Natural killer cell (primary cell): ENCODE measurements at regions of chr22 and their contacts with region 1.

Region 1: DNA sequence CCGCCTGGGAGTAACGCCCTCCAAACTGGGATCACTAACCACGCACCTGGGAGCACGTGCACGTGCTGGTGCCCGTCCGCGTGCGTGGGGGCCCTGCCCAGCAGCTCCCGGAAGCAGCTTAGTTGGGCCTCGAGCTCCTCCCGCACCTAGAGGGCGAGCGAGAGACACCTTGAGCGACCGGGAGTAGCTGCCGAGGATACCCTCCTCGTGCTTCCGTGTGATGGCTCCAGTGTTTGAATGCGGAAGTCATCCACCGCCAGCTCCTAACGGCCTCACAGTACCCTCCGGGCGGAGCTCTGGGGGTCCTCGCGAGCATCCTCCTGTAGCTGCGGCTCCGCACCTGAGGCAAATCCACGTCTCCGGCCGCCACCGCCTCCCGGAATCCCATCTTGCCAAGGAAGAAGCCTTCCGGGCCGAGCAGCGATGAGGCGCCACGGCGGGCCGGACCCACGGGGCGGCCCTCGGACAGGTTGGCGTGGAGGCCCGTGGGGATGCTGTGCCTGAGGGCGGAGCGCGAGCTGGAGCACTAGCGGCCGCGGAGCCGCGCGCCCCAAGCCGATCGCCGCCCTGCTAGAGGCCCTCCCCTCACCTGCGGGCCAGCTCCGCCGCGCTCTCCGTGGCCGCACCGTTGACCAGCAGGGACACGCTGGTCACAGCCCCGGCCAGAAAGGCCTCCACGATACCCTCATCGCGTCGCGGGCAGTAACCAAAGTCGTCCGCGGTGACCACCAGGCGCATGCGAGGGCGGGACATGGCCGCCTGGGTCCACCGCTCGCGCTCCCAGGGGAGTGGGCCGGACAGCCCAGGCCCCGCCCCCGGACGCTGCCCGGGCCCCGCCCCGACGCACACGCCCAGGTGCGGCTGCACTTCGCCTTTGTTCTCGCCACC is at the start of gene YDJC:
- DNase-seq: peak; percentile 93 to 97
- ATAC-seq: peak; percentile 87 to 97 (median 92)
- H3K4me3 ChIP-seq: peak within 1 kb of the TSS; percentile 99
- H3K4me3 Mint-ChIP-seq: peak within 1 kb of the TSS; percentile 90
- H3K27ac ChIP-seq: peak within 1 kb of the TSS; percentile 89
- H3K27ac Mint-ChIP-seq: peak within 1 kb of the TSS; percentile 75 to 83
- H3K4me1 ChIP-seq: peaks cover 45% of the 10 kb centered on the region
- H3K4me1 Mint-ChIP-seq: peaks cover 32 to 36% of the 10 kb centered on the region in 2 donors
- H3K27me3 ChIP-seq: no peaks in the 10 kb centered on the region
- H3K27me3 Mint-ChIP-seq: no peaks in the 10 kb centered on the region
- CTCF ChIP-seq: no peak
- total RNA-seq, gene YDJC: 20.5 to 24.4 (median 21.6) TPM

Region 2: DNA sequence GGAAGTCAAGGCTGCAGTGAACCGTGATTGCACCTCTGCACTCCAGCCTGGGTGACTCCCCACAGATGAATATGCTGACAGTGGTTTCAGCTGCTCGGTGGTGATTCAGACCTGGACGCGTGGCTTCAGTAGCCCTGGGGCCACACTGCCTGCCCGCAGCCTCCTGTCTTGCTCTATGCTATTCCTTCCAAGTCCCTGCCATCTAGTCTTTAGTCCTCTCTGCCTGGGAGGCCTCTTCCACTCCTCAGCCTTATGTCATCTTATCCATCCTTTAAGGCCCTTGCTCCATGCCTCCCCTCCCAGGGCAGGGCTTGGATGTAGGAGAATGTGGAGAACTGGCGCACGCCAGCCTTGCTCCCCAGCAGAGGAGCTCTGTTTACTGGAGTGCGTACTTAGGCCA is 22.7 kb before region 1 on chr22:
- intact Hi-C with region 1: no loop called
- DNase-seq: no peak
- ATAC-seq: no peak
- H3K4me3 ChIP-seq: no peak overlapping the region
- H3K4me3 Mint-ChIP-seq: no peak overlapping the region
- H3K27ac ChIP-seq: no peak overlapping the region
- H3K27ac Mint-ChIP-seq: peak overlapping the region in 1 of 2 donors; percentile 56
- H3K4me1 ChIP-seq: peaks cover 20% of the 10 kb centered on the region
- H3K4me1 Mint-ChIP-seq: peaks cover 38 to 57% of the 10 kb centered on the region in 2 donors
- H3K27me3 ChIP-seq: no peaks in the 10 kb centered on the region
- H3K27me3 Mint-ChIP-seq: no peaks in the 10 kb centered on the region
- CTCF ChIP-seq: no peak

Region 3: GRCh38 chr22:21641789-21642583 is 12.5 kb after region 1 on chr22 and contains the start of gene SDF2L1:
- intact Hi-C with region 1: loop called (anchors 1 kb)
- DNase-seq: peak; percentile 98 to 99
- ATAC-seq: peak; percentile 94 to 99 (median 95)
- H3K4me3 ChIP-seq: peak within 1 kb of the TSS; percentile 92
- H3K4me3 Mint-ChIP-seq: peak within 1 kb of the TSS; percentile 93
- H3K27ac ChIP-seq: peak within 1 kb of the TSS; percentile 80
- H3K27ac Mint-ChIP-seq: peak within 1 kb of the TSS; percentile 86 to 90
- H3K4me1 ChIP-seq: peaks cover 31% of the 10 kb centered on the region
- H3K4me1 Mint-ChIP-seq: peaks cover 35 to 42% of the 10 kb centered on the region in 2 donors
- H3K27me3 ChIP-seq: no peaks in the 10 kb centered on the region
- H3K27me3 Mint-ChIP-seq: no peaks in the 10 kb centered on the region
- CTCF ChIP-seq: no peak
- total RNA-seq, gene SDF2L1: 38.3 to 55.8 (median 40.3) TPM

Region 4: GRCh38 chr22:22123118-22123959 is 493.8 kb after region 1 on chr22:
- intact Hi-C with region 1: no loop called
- DNase-seq: no peak
- ATAC-seq: no peak
- H3K4me3 ChIP-seq: no peak overlapping the region
- H3K4me3 Mint-ChIP-seq: no peak overlapping the region
- H3K27ac ChIP-seq: no peak overlapping the region
- H3K27ac Mint-ChIP-seq: no peak overlapping the region
- H3K4me1 ChIP-seq: no peaks in the 10 kb centered on the region
- H3K4me1 Mint-ChIP-seq: no peaks in the 10 kb centered on the region
- H3K27me3 ChIP-seq: peaks cover 2% of the 10 kb centered on the region
- H3K27me3 Mint-ChIP-seq: peaks cover 8 to 16% of the 10 kb centered on the region in 2 donors
- CTCF ChIP-seq: no peak